Transverse colon (tissue), 4 donors: ENCODE measurements at regions of chr13 and their contacts with region 1.

Region 1: GRCh38 chr13:71149498-71150363 is 717.3 kb downstream of the DACH1 start:
- DNase-seq: no peak
- H3K4me3 ChIP-seq: no peak overlapping the region
- H3K27ac ChIP-seq: no peak overlapping the region
- H3K4me1 ChIP-seq: no peaks in the 10 kb centered on the region
- H3K27me3 ChIP-seq: no peaks in the 10 kb centered on the region
- CTCF ChIP-seq: no peak
- EP300 ChIP-seq: no peak
- POLR2A ChIP-seq: no peak

Region 2: GRCh38 chr13:71240911-71241310 is 91.2 kb after region 1 on chr13:
- in situ Hi-C with region 1: loop called in 1 of 4 experiments (anchors 25 kb)
- intact Hi-C with region 1: no loop called
- DNase-seq: no peak
- H3K4me3 ChIP-seq: no peak overlapping the region
- H3K27ac ChIP-seq: no peak overlapping the region
- H3K4me1 ChIP-seq: no peaks in the 10 kb centered on the region
- H3K27me3 ChIP-seq: no peaks in the 10 kb centered on the region
- CTCF ChIP-seq: peak in 3 of 5 experiments; percentile 13 to 26 (median 14)
- EP300 ChIP-seq: no peak
- POLR2A ChIP-seq: no peak

Region 3: GRCh38 chr13:71524613-71525304 is 375.0 kb after region 1 on chr13:
- in situ Hi-C with region 1: no loop called
- intact Hi-C with region 1: no loop called
- DNase-seq: no peak
- H3K4me3 ChIP-seq: no peak overlapping the region
- H3K27ac ChIP-seq: no peak overlapping the region
- H3K4me1 ChIP-seq: no peaks in the 10 kb centered on the region
- H3K27me3 ChIP-seq: no peaks in the 10 kb centered on the region
- CTCF ChIP-seq: no peak
- EP300 ChIP-seq: no peak
- POLR2A ChIP-seq: no peak